B cell (primary cell): ENCODE measurements at regions of chr10 and their contacts with region 1.

Region 1: GRCh38 chr10:52488606-52489485 is 174.8 kb downstream of the DKK1 start:
- DNase-seq: peak; percentile 24
- ATAC-seq: no peak
- H3K4me3 ChIP-seq: no peak overlapping the region
- H3K4me3 Mint-ChIP-seq: no peak overlapping the region
- H3K27ac ChIP-seq: no peak overlapping the region
- H3K27ac Mint-ChIP-seq: no peak overlapping the region
- H3K4me1 ChIP-seq: no peaks in the 10 kb centered on the region
- H3K4me1 Mint-ChIP-seq: peaks cover 4% of the 10 kb centered on the region
- H3K27me3 ChIP-seq: no peaks in the 10 kb centered on the region
- H3K27me3 Mint-ChIP-seq: no peaks in the 10 kb centered on the region
- CTCF ChIP-seq: peak; percentile 67

Region 2: DNA sequence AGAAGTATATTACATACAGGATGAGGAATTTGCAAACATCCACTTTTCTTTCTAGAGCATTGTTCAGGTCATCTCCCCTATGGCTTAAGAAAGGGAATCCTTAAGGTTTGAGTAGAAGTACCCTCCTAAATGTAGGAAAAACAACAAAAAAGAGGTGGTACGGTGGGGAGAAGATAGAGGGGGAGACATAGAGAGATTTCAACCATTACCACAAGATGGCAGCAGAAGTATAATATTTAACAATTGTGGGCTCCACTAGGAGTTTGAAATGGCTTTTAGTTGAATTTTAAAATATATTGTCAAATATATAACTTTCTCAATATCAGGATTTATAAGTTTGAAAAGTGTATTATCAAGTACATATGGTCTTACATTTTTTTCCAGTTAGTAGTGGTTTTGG is 1487.3 kb before region 1 on chr10:
- CTCF ChIA-PET with region 1: interaction called, 3 read pairs
- POLR2A ChIA-PET with region 1: no interaction called
- intact Hi-C with region 1: loop called (anchors 5 kb)
- DNase-seq: peak; percentile 25
- ATAC-seq: no peak
- H3K4me3 ChIP-seq: no peak overlapping the region
- H3K4me3 Mint-ChIP-seq: no peak overlapping the region
- H3K27ac ChIP-seq: no peak overlapping the region
- H3K27ac Mint-ChIP-seq: no peak overlapping the region
- H3K4me1 ChIP-seq: no peaks in the 10 kb centered on the region
- H3K4me1 Mint-ChIP-seq: no peaks in the 10 kb centered on the region
- H3K27me3 ChIP-seq: peaks cover 0 to 12% (median 0%) of the 10 kb centered on the region in 4 experiments
- H3K27me3 Mint-ChIP-seq: peaks cover 19% of the 10 kb centered on the region
- CTCF ChIP-seq: peak; percentile 74

Region 3: GRCh38 chr10:52308251-52309031 is 180.4 kb before region 1 on chr10:
- CTCF ChIA-PET with region 1: interaction called, 46 read pairs
- POLR2A ChIA-PET with region 1: no interaction called
- intact Hi-C with region 1: no loop called
- DNase-seq: peak; percentile 67
- ATAC-seq: peak; percentile 64
- H3K4me3 ChIP-seq: peak overlapping the region; percentile 24 to 74 (median 51)
- H3K4me3 Mint-ChIP-seq: peak overlapping the region; percentile 85
- H3K27ac ChIP-seq: no peak overlapping the region
- H3K27ac Mint-ChIP-seq: no peak overlapping the region
- H3K4me1 ChIP-seq: peaks cover 10 to 14% of the 10 kb centered on the region in 2 donors
- H3K4me1 Mint-ChIP-seq: peaks cover 13% of the 10 kb centered on the region
- H3K27me3 ChIP-seq: peaks cover 0 to 24% (median 15%) of the 10 kb centered on the region in 4 experiments
- H3K27me3 Mint-ChIP-seq: peaks cover 51% of the 10 kb centered on the region
- CTCF ChIP-seq: peak; percentile 68

Region 4: DNA sequence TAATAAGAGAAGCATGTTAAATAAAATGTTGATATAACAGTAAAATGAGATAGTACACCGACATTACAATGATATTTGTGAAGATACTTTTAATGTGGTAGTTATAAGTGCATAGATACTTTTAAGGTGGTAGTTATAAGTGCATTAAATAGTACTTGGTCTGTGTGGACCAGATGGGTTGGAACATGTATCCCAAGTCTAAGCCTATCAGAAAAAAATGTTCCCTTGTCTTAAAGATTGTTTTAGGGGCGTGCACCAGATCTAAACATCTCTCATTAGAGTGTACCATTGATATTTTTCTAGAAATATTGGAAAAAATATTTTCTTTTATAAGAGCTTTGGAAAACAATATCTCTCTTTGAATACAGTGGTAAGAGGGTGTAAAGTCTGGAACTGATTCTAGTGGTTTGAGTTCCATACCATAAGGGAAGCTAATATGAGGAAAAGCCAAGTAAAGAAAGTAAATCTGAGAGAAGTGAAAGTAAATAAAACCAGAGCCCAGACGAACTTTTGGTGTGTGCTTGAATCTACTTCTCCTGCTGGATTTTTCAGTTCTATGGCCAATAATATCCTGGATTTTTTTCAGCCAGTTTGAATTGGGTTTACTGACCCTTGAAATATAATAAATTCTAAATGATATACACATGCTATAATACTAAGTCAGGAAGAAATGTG is 108.5 kb after region 1 on chr10:
- CTCF ChIA-PET with region 1: no interaction called
- POLR2A ChIA-PET with region 1: no interaction called
- intact Hi-C with region 1: no loop called
- DNase-seq: no peak
- ATAC-seq: no peak
- H3K4me3 ChIP-seq: no peak overlapping the region
- H3K4me3 Mint-ChIP-seq: no peak overlapping the region
- H3K27ac ChIP-seq: no peak overlapping the region
- H3K27ac Mint-ChIP-seq: no peak overlapping the region
- H3K4me1 ChIP-seq: no peaks in the 10 kb centered on the region
- H3K4me1 Mint-ChIP-seq: no peaks in the 10 kb centered on the region
- H3K27me3 ChIP-seq: no peaks in the 10 kb centered on the region
- H3K27me3 Mint-ChIP-seq: no peaks in the 10 kb centered on the region
- CTCF ChIP-seq: no peak